Right ventricle myocardium superior (tissue), 1 donor: ENCODE measurements at regions of chr3 and their contacts with region 1.

Region 1: GRCh38 chr3:142993958-142994442 is 7.4 kb upstream of the U2SURP start:
- DNase-seq: peak; percentile 65
- ATAC-seq: peak; percentile 71

Region 2: GRCh38 chr3:142586803-142587406 is 407.1 kb before region 1 on chr3:
- intact Hi-C with region 1: loop called (anchors 10 kb)
- DNase-seq: no peak
- ATAC-seq: peak; percentile 87

Region 3: GRCh38 chr3:142828703-142829305 is 165.2 kb before region 1 on chr3:
- intact Hi-C with region 1: loop called (anchors 2 kb)
- DNase-seq: peak; percentile 88
- ATAC-seq: peak; percentile 98